ENCODE measurements at regions of chr4 and their contacts with region 1.

Region 1: DNA sequence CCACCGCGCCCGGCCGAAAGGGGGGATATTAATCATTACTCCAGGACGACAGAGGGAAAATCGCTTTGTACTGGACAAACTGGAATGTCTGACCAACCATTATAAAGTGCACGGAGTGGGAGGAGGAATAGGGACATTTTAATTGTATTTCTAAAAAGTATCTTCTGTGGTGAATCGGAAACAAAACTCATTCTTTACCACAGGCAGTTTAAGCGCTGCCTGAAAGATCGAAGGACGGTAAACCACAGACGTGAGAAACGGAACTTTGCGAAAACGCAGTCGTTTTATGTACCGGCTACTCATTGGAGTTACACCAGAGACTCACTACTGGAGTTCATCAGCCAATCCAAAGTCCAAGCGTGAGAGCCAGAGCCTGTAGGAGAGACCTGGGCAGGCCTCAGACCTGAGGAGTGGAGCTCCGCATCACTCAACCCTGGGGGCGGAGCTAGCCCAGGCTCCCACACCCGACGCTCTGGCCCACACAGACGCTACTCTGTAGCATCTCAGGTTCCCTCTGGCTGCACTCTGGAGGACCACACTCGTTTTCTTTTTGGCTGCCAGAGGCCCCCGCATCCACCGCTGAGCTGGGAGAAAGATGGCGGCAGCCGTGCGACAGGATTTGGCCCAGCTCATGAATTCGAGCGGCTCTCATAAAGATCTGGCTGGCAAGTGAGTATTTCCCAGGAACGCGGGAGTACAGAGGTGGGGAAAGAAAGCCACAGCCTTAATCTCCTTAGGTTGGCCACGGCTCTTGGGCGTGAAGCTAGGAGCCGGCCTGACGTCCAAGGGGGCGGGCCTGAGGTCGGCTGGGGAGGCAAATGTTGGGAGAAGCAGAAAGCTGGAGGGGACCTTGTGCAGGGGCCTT is at the start of gene COPS4:
- DNase-seq: peak; percentile 98
- H3K4me3 Mint-ChIP-seq: peak within 1 kb of the TSS; percentile 90
- H3K27ac Mint-ChIP-seq: peak within 1 kb of the TSS; percentile 98
- H3K4me1 Mint-ChIP-seq: peaks cover 16% of the 10 kb centered on the region
- H3K27me3 Mint-ChIP-seq: peaks cover 6% of the 10 kb centered on the region
- total RNA-seq, gene COPS4: 36.5 and 37.5 TPM in 2 replicates

Region 2: DNA sequence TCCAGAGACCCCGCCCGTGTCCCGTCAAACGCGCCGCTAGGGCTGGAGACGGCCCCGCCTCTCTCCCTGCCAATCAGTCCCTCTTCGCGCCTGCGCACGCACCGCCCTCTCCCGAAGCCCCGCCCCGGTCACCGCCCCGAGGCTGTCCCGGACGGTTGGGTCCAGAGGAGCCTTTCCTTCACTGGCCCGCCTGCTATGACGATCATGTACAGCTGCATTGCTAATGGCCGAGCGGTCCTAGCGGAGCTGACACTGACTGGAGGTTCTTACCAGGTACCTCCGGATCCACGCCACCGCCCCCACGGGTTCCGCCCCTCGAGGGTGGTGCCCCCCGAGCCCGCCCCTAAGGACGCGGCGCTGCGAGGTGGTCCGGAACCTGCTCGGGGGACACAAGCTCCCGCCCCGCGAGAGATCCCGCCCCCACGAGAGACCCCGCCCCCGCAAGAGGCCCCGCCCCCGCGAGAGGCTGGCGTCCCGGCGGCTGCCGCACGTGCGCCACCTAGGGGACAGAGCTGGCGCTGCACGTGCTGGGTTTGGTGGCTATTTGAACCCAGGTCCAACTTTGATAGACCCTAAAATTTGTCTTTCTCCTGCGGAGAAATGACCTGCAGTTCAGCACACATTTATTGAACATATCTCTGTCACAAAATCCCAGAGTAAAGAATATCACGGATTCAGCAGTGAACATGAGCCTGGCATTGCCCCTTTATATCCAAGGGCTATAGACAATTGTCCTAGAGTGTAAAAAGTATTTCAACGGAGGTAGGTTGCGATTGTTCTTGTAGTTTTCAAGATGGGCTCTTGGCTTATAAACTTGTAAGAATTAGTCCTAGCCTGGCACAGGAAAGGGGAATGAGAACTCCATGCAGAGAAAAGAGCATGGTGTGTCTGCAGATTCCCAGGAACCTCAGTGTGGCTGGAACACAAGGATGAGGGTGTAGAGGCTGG is 749.7 kb before region 1 on chr4:
- intact Hi-C with region 1: loop called (anchors 10 kb)
- DNase-seq: peak; percentile 100
- H3K4me3 Mint-ChIP-seq: peak overlapping the region; percentile 72
- H3K27ac Mint-ChIP-seq: peak overlapping the region; percentile 48
- H3K4me1 Mint-ChIP-seq: peaks cover 12% of the 10 kb centered on the region
- H3K27me3 Mint-ChIP-seq: peaks cover 27% of the 10 kb centered on the region

Region 3: DNA sequence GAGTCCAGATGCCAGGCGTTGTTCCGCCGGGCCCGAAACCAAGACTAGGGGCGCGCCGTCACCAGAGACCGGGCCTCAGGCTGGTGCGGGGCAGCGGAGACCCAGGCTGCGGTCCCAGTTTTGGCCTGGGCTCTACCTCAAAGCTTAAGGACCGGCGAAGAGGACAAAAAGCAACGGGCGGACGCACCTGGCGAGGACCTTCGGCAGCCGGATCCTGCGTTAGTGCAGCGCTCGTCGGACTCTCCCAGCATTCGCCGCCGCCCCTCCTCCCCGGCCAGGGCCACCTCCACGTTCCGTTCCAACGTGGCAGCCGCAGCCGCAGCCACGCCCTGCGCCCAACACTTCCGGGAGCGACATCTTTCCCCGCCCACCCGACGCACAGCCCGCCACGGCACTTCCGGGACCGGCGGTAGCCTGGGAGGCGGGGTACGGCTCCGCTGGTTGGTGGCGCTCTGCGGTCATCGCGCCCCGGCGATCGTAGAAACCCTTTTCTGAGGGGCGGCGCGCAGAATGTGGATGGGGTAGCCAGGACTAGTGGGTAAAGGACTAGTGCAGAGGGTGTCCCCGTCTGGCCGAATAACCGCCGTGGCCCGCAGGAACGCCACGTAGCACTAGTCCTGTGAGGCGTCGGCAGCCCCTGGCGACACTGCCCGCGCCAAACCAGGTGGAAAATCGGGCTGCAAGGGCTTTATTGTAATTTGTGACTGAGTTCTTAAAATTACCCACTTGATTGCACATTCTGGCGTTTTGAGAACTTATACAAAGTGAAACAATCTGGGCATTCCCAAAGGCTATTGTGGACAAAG is 143.8 kb before region 1 on chr4 and contains the start of gene SEC31A:
- intact Hi-C with region 1: loop called (anchors 1 kb)
- DNase-seq: peak; percentile 99
- H3K4me3 Mint-ChIP-seq: peak within 1 kb of the TSS; percentile 88
- H3K27ac Mint-ChIP-seq: peak within 1 kb of the TSS; percentile 90
- H3K4me1 Mint-ChIP-seq: peaks cover 41% of the 10 kb centered on the region
- H3K27me3 Mint-ChIP-seq: no peaks in the 10 kb centered on the region
- total RNA-seq, gene SEC31A: 122 and 125 TPM in 2 replicates

Region 4: DNA sequence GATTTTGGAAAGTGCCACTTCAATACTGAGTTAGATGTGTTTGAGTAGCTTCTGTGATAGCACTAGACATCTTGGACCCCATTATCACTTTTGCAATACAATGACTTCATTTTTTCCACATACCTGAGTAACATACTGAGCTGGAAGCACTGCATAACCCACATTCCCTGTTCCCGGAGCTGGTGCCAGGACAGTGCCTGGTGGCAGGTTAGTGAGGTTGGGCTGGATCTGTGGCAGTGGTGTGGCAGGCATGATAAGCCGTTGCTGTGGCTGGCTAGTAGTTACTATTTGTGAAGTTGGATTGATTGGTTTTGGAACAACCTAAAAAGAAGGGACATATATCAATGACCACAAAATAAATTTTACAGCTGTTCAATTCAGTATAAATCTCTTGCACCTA is 95.4 kb before region 1 on chr4:
- intact Hi-C with region 1: no loop called
- DNase-seq: peak; percentile 53
- H3K4me3 Mint-ChIP-seq: no peak overlapping the region
- H3K27ac Mint-ChIP-seq: no peak overlapping the region
- H3K4me1 Mint-ChIP-seq: peaks cover 3% of the 10 kb centered on the region
- H3K27me3 Mint-ChIP-seq: no peaks in the 10 kb centered on the region

Region 5: DNA sequence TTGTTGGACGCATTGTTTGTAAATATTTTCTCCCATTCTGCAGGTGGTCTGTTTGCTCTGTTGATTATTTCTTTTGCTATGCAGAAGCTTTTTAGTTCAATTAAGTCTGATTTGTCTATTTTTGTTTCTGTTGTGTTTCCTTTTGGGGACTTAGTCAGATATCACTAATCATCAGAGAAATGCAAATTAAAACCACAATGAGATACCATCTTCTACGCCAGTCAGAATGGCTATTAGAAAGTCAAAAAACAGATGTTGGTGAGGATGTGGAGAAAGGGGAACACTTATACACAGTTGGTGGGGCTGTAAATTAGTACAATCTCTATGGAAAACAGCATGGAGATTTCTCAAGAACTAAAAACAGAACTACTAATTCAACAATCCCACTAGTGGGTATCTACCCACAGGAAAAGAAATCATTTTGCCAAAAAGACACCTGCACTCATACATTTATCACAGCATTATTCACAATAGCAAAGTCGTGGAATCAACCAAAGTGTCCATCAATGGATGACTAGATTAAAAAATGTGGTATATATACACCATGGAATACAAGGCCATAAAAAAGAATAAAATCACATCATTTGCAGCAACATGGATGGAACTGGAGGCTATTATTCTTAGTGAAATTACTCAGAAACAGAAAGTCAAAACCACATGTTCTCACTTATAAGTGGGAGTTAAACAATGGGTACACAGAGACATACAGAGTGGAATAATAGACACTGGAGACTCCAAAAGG is 241.6 kb after region 1 on chr4:
- intact Hi-C with region 1: no loop called
- DNase-seq: no peak
- H3K4me3 Mint-ChIP-seq: peak overlapping the region; percentile 33
- H3K27ac Mint-ChIP-seq: peak overlapping the region; percentile 75
- H3K4me1 Mint-ChIP-seq: peaks cover 23% of the 10 kb centered on the region
- H3K27me3 Mint-ChIP-seq: no peaks in the 10 kb centered on the region

Region 6: DNA sequence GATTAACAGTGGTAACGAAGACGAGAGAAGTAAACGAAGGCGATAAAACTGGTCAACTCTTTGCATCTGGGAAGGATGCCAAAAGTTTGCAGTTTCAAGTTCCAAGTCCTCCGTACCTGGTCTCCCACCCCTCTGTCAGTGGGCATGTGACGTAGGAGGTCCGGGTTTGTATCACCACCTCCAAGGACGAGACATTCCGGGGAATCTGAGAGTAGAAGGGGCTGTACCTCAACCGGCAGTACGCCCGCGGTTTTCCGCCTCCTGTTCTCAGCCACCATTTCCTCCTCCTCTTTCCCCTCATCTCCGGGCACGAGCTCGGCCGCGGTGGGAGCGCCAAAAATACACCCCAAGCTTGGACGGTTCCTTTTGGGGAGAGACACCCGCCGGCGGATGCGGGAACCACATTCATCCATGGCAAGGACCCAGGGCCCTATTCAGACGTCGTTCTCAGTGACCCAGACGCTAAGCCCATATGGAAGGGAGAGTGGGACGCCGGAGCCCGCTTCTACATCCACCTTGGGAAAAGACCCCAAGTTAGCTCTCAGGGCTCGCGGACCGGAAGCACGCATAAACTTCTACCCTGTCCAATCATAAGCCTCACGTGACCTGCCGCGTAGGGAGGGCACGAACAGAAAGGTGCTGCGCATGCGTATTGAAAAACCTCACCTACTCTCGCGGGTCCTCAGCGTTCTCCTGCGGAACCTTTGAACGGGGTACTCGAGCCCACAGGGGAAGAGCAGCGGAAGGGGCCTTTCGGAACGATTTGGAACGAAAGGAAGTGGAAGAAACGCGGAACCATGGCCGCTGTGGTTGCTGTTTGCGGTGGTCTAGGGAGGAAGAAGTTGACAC is 420.6 kb after region 1 on chr4 and contains the starts of genes HELQ and MRPS18C:
- intact Hi-C with region 1: loop called (anchors 1 kb)
- DNase-seq: peak; percentile 98
- H3K4me3 Mint-ChIP-seq: peak within 1 kb of the TSS; percentile 99
- H3K27ac Mint-ChIP-seq: peak within 1 kb of the TSS; percentile 100
- H3K4me1 Mint-ChIP-seq: peaks cover 26% of the 10 kb centered on the region
- H3K27me3 Mint-ChIP-seq: no peaks in the 10 kb centered on the region
- total RNA-seq, gene HELQ: 9.1 and 11.4 TPM in 2 replicates
- total RNA-seq, gene MRPS18C: 83.9 and 86.6 TPM in 2 replicates

Region 7: DNA sequence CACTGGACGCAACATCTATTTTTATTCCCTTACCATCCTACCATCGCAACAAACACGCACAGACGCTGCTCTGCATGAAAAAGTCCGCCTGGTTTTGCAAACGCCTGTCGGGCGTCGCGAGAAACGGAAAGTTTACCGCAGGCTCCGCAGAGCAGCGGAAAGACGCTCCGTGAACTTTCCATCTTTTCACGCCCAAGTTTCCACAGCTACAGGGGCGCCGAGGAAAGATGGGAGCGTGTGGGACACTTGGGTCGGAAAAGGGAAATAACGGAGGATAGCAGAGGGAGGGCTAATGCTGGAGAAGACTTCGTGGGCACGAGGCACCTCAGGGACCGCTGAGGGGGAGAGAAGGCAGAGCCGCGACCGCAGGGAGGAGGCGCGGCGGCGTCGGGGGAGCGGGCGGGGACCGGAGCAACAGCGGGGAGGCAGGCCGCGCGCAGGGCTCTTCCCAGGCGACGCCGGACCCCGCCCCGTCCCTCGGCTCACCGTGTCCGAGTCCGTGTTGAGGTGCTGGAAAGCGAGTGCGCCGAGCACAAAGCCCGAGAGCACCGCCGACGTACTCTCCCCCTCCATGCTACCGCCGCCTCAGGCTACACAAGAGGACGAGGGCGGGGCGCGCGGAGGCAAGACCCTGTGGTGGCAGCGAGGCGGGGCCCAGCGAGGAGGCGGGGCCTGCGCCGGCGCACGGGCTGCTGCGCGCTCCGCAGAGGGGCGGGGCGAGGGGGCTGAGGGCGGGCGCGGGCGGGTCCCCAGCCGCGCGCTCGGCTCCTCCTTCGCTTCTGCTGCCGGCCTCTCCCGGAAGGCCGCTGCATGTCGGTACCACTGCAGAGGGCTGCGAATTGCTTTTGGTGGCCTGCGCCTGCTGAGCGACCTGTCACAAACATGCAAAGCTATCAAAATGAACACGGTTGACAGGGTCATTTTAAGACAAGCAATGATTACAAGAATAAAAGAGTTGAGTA is 449.9 kb after region 1 on chr4 and contains the start of gene ABRAXAS1:
- intact Hi-C with region 1: loop called (anchors 1 kb)
- DNase-seq: peak; percentile 98
- H3K4me3 Mint-ChIP-seq: peak within 1 kb of the TSS; percentile 96
- H3K27ac Mint-ChIP-seq: peak within 1 kb of the TSS; percentile 95
- H3K4me1 Mint-ChIP-seq: peaks cover 7% of the 10 kb centered on the region
- H3K27me3 Mint-ChIP-seq: no peaks in the 10 kb centered on the region
- total RNA-seq, gene ABRAXAS1: 10.4 and 12.0 TPM in 2 replicates